Activated naive CD4-positive, alpha-beta T cell treated with anti-CD3 and anti-CD28 coated beads, Interleukin-2, amount 10 ng/mL, durations not matched to agents 7 days and 5 days (primary cell): ENCODE measurements at regions of chr21 and their contacts with region 1.

Region 1: GRCh38 chr21:34933609-34934335 is 115.3 kb downstream of the RUNX1 start:
- DNase-seq: peak; percentile 49
- H3K4me3 Mint-ChIP-seq: peak overlapping the region; percentile 71
- H3K27ac Mint-ChIP-seq: peak overlapping the region; percentile 99
- H3K4me1 Mint-ChIP-seq: peaks cover 75% of the 10 kb centered on the region
- H3K27me3 Mint-ChIP-seq: no peaks in the 10 kb centered on the region

Region 2: DNA sequence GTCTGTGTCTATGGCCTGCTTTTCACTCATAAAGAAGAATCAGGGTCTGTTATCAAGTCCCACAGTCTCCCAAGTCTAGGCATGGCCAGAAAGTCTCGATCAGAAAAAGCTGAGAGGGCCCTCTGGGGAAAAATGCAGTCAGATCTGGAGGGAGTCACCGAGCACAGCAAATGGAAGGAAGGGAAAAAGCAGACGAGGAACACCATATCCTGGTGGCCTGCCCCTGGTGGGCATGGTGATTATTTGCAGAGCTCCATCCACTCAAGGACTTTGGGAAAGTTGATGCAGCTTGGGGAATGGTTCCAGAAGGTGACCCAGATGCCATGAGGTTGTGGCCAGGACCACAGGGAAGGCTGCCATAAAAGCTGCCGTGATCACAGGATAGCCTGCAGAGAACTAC is 75.9 kb before region 1 on chr21:
- CTCF ChIA-PET with region 1: no interaction called
- DNase-seq: no peak
- H3K4me3 Mint-ChIP-seq: no peak overlapping the region
- H3K27ac Mint-ChIP-seq: no peak overlapping the region
- H3K4me1 Mint-ChIP-seq: peaks cover 34% of the 10 kb centered on the region
- H3K27me3 Mint-ChIP-seq: no peaks in the 10 kb centered on the region

Region 3: GRCh38 chr21:34888569-34889319 is 45.0 kb before region 1 on chr21:
- CTCF ChIA-PET with region 1: interaction called, 11 read pairs
- DNase-seq: peak; percentile 85
- H3K4me3 Mint-ChIP-seq: peak overlapping the region; percentile 85
- H3K27ac Mint-ChIP-seq: peak overlapping the region; percentile 97
- H3K4me1 Mint-ChIP-seq: peaks cover 57% of the 10 kb centered on the region
- H3K27me3 Mint-ChIP-seq: peaks cover 13% of the 10 kb centered on the region

Region 4: GRCh38 chr21:34916446-34916845 is 17.3 kb before region 1 on chr21:
- CTCF ChIA-PET with region 1: no interaction called
- DNase-seq: no peak
- H3K4me3 Mint-ChIP-seq: no peak overlapping the region
- H3K27ac Mint-ChIP-seq: no peak overlapping the region
- H3K4me1 Mint-ChIP-seq: peaks cover 6% of the 10 kb centered on the region
- H3K27me3 Mint-ChIP-seq: no peaks in the 10 kb centered on the region

Region 5: DNA sequence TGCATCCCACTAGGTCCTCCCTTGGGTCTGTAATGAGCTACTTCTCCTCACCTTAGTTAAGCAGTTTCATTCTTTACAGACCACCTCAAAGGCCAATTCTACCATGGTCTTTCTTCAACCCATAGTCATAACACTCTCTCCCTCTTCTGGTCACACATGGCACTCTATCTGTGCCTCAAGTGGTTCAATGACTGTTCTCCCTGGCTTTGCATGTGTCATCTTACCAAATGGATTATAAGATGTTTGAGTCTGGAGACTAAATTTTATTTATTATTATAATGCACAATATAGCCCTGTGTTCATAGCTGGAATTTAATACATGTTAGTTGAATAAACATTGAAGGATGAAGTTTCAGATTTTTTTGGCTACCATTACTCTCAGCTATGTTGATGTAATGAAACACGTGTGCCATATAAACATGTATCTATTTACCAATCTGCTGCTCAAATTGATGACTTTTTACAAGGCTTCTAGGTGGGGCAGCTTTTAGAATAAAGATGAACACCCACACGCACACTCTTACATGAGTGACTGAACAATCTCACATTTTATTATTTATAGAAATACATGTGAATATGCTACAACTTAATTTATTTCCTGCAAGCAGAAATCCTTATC is 13.3 kb after region 1 on chr21:
- CTCF ChIA-PET with region 1: interaction called, 13 read pairs
- DNase-seq: no peak
- H3K4me3 Mint-ChIP-seq: no peak overlapping the region
- H3K27ac Mint-ChIP-seq: no peak overlapping the region
- H3K4me1 Mint-ChIP-seq: peaks cover 71% of the 10 kb centered on the region
- H3K27me3 Mint-ChIP-seq: no peaks in the 10 kb centered on the region

Region 6: GRCh38 chr21:35438643-35439404 is 505.1 kb after region 1 on chr21:
- CTCF ChIA-PET with region 1: no interaction called
- DNase-seq: peak; percentile 43
- H3K4me3 Mint-ChIP-seq: peak overlapping the region; percentile 15
- H3K27ac Mint-ChIP-seq: peak overlapping the region; percentile 61
- H3K4me1 Mint-ChIP-seq: peaks cover 22% of the 10 kb centered on the region
- H3K27me3 Mint-ChIP-seq: peaks cover 3% of the 10 kb centered on the region